ENCODE measurements at regions of chr10 and their contacts with region 1.

Region 1: GRCh38 chr10:62637249-62638061 is 167.1 kb upstream of the ADO start:
- DNase-seq: peak; percentile 81
- ATAC-seq: peak; percentile 79
- H3K4me3 ChIP-seq: peak overlapping the region; percentile 12
- H3K27ac ChIP-seq: peak overlapping the region; percentile 95
- H3K4me1 ChIP-seq: peaks cover 85% of the 10 kb centered on the region
- H3K27me3 ChIP-seq: no peaks in the 10 kb centered on the region
- CTCF ChIP-seq: no peak
- EP300 ChIP-seq: peak; percentile 23 to 60; a peak in 3 of 4 replicates
- POLR2A ChIP-seq: peak; percentile 61
- RAD21 ChIP-seq: no peak

Region 2: DNA sequence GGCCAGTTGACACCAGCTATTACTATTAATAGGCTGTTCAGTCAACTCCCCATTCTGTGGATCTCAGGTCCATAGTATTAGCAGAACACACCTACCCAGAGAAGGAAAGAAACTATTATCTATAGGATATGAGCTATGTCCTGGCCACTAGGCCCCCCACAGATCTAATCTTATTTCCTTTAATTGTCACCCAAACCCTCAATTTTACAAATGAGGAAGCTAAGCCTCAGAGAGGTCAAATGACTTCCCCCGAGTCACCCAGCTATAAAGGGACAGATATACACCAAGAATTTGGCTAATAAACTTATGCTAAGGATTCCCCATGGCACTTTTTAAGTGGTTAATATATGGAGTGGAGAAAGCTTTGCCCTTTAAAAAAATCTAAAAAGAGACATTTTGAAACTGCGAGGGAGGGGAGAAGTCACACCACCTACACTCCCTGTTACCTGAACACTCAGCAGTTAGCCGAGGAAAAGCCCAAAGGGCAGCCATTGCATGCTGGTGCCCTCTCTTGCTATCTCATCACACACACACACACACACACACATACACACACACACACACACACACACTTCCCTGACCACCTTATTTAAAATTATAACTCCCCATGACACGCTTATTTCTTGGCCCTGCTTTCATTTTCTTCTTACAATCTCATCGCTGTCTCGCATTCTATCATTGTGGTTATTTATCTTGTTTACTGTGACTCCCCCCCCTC is 10.1 kb after region 1 on chr10:
- CTCF ChIA-PET with region 1: interaction called, 64 read pairs
- POLR2A ChIA-PET with region 1: interaction called, 59 read pairs
- RAD21 ChIA-PET with region 1: interaction called, 97 read pairs
- SMC1A ChIA-PET with region 1: interaction called, 329 read pairs
- in situ Hi-C with region 1: no loop called
- intact Hi-C with region 1: no loop called
- DNase-seq: no peak
- ATAC-seq: peak; percentile 59
- H3K4me3 ChIP-seq: no peak overlapping the region
- H3K27ac ChIP-seq: no peak overlapping the region
- H3K4me1 ChIP-seq: peaks cover 29% of the 10 kb centered on the region
- H3K27me3 ChIP-seq: no peaks in the 10 kb centered on the region
- CTCF ChIP-seq: no peak
- EP300 ChIP-seq: peak; percentile 29 to 40; a peak in 1 of 4 replicates
- POLR2A ChIP-seq: no peak
- RAD21 ChIP-seq: no peak

Region 3: GRCh38 chr10:62707810-62708209 is 70.4 kb after region 1 on chr10:
- CTCF ChIA-PET with region 1: interaction called, 4 read pairs
- POLR2A ChIA-PET with region 1: no interaction called
- RAD21 ChIA-PET with region 1: interaction called, 21 read pairs
- SMC1A ChIA-PET with region 1: interaction called, 21 read pairs
- in situ Hi-C with region 1: no loop called
- intact Hi-C with region 1: no loop called
- DNase-seq: peak; percentile 40
- ATAC-seq: peak; percentile 76
- H3K4me3 ChIP-seq: peak overlapping the region; percentile 9; the same call in 1 of the 2 replicates
- H3K27ac ChIP-seq: peak overlapping the region; percentile 61; the same call in 1 of the 2 replicates
- H3K4me1 ChIP-seq: peaks cover 30% of the 10 kb centered on the region
- H3K27me3 ChIP-seq: no peaks in the 10 kb centered on the region
- CTCF ChIP-seq: no peak
- EP300 ChIP-seq: peak; percentile 9 to 76; a peak in 2 of 4 replicates
- POLR2A ChIP-seq: no peak
- RAD21 ChIP-seq: 0 out of 2 replicates have a peak, but pooled peaks have one; percentile 20

Region 4: DNA sequence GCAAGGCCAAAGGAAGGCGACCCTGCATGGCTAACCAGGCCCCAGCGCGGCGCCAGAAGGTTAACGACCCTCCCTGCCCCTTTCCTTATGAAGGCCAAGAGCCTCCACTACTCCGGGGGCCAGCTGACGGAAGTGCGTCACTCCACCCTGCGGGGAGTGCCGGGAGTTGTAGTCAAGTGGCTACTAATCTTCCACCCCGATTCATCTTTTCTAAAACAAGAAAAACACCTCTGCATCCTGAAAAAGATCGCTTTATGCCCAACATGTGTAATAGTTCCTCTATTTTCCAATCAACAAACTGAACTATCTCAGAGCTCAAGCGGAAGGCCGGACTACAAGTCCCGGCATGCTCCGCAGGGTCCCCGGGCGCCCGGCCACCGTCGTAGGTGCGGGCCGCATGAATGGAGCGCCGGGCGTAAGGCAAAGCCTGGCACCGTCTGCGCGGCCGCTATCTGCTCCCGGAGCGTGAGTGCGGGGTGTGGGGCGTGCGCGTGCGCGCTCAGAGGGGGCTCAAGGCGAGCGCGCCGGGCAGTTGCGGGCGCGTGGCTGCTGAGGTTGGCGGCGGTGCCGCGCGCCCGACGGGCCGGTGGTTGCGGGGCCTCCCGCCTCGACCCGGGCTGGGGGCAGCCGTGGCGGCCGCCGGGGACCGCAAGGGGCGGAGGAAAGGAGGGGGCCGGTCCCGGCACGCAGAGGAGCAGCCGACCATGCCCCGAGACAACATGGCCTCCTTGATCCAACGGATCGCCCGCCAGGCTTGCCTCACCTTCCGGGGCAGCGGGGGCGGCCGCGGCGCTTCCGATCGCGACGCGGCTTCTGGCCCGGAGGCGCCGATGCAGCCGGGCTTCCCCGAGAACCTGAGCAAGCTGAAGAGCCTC is 167.1 kb after region 1 on chr10 and contains the start of gene ADO:
- CTCF ChIA-PET with region 1: interaction called, 6 read pairs
- POLR2A ChIA-PET with region 1: no interaction called
- RAD21 ChIA-PET with region 1: interaction called, 12 read pairs
- SMC1A ChIA-PET with region 1: interaction called, 82 read pairs
- in situ Hi-C with region 1: no loop called
- intact Hi-C with region 1: no loop called
- DNase-seq: peak; percentile 59
- ATAC-seq: peak; percentile 83
- H3K4me3 ChIP-seq: peak within 1 kb of the TSS; percentile 88
- H3K27ac ChIP-seq: peak within 1 kb of the TSS; percentile 98
- H3K4me1 ChIP-seq: peaks cover 4% of the 10 kb centered on the region; the same call in 1 of the 2 replicates
- H3K27me3 ChIP-seq: no peaks in the 10 kb centered on the region
- CTCF ChIP-seq: no peak
- EP300 ChIP-seq: peak in 1 of 2 experiments; percentile 26; a peak in 1 of 4 replicates
- POLR2A ChIP-seq: peak; percentile 89
- RAD21 ChIP-seq: 0 out of 2 replicates have a peak, but pooled peaks have one; percentile 6
- polyA plus RNA-seq, gene ADO: 4.3 to 8.5 TPM

Region 5: GRCh38 chr10:62972103-62972502 is 334.6 kb after region 1 on chr10:
- CTCF ChIA-PET with region 1: no interaction called
- POLR2A ChIA-PET with region 1: no interaction called
- RAD21 ChIA-PET with region 1: no interaction called
- SMC1A ChIA-PET with region 1: no interaction called
- in situ Hi-C with region 1: no loop called
- intact Hi-C with region 1: no loop called
- DNase-seq: no peak
- ATAC-seq: no peak
- H3K4me3 ChIP-seq: no peak overlapping the region
- H3K27ac ChIP-seq: no peak overlapping the region
- H3K4me1 ChIP-seq: no peaks in the 10 kb centered on the region
- H3K27me3 ChIP-seq: no peaks in the 10 kb centered on the region; a peak in 1 of 4 replicates
- CTCF ChIP-seq: no peak
- EP300 ChIP-seq: no peak
- POLR2A ChIP-seq: no peak
- RAD21 ChIP-seq: no peak

Measured in GM12878 (cell line).